ENCODE measurements at regions of chr9 and their contacts with region 1.

Region 1: GRCh38 chr9:129460323-129461261 is 160.3 kb downstream of the C9orf50 start:
- DNase-seq: peak; percentile 97
- H3K4me3 Mint-ChIP-seq: peak overlapping the region; percentile 78
- H3K27ac Mint-ChIP-seq: peak overlapping the region; percentile 85
- H3K4me1 Mint-ChIP-seq: peaks cover 24% of the 10 kb centered on the region
- H3K27me3 Mint-ChIP-seq: no peaks in the 10 kb centered on the region

Region 2: GRCh38 chr9:129495534-129496325 is 35.1 kb after region 1 on chr9:
- CTCF ChIA-PET with region 1: interaction called, 4 read pairs
- intact Hi-C with region 1: loop called (anchors 2 kb)
- DNase-seq: peak; percentile 84
- H3K4me3 Mint-ChIP-seq: peak overlapping the region; percentile 76
- H3K27ac Mint-ChIP-seq: peak overlapping the region; percentile 64
- H3K4me1 Mint-ChIP-seq: peaks cover 33% of the 10 kb centered on the region
- H3K27me3 Mint-ChIP-seq: no peaks in the 10 kb centered on the region

Region 3: GRCh38 chr9:129544761-129545160 is 84.2 kb after region 1 on chr9:
- CTCF ChIA-PET with region 1: no interaction called
- intact Hi-C with region 1: no loop called
- DNase-seq: no peak
- H3K4me3 Mint-ChIP-seq: no peak overlapping the region
- H3K27ac Mint-ChIP-seq: no peak overlapping the region
- H3K4me1 Mint-ChIP-seq: peaks cover 3% of the 10 kb centered on the region
- H3K27me3 Mint-ChIP-seq: peaks cover 15% of the 10 kb centered on the region